Motor neuron (in vitro differentiated cells): ENCODE measurements at regions of chr11 and their contacts with region 1.

Region 1: DNA sequence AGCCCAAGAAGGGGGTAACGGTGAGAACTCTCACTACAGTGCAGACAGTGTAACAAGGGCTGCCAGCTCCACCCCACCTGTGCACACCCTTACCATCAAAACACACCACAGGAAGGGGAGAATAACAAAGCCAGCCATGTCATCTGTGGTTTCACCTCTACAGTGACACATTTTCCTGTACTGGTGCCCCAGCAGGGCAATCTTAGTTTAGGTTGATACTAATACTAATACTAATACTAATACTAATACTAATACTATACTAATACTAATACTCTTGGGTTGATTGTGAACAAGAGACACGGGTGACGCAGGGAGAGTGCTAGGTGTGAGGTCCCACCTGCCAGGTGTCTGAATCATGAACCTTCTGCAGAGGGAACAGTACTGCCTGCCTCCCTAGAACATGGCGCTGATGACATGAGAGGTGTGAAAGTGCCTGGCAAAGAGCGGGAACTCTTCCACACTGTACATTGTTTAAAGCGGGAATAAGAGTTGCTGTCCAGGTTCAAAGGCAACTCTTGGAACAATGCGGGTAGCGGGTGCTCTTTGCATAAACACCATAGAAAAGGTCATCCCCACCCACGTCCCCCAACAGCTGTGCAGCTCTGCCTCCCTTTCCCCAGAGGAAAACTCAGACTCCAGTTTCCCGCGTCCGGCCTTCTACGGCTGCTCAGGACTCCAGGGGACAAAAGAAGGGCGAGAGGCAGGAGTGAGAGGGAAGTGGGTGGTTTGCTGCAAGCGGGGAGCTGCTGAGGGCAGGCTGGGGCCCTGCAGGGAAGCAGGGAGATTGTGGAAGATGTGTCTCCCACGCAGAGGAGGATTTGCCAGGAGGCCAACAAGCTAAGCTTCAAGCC is 25.0 kb upstream of the TMPRSS4 start:
- ATAC-seq: peak in 2 of 8 experiments; percentile 35 to 48
- H3K4me3 ChIP-seq: no peak overlapping the region
- H3K27ac ChIP-seq: no peak overlapping the region
- H3K4me1 ChIP-seq: no peaks in the 10 kb centered on the region

Region 2: GRCh38 chr11:117817368-117818040 is 234.3 kb before region 1 on chr11:
- in situ Hi-C with region 1: loop called in 3 of 9 experiments (anchors 10 to 25 kb)
- ATAC-seq: peak; percentile 3 to 61 (median 10)
- H3K4me3 ChIP-seq: no peak overlapping the region
- H3K27ac ChIP-seq: peak overlapping the region in 1 of 2 donors; percentile 78
- H3K4me1 ChIP-seq: peaks cover 35 to 45% of the 10 kb centered on the region in 2 donors

Region 3: GRCh38 chr11:117843666-117844484 is 208.0 kb before region 1 on chr11:
- in situ Hi-C with region 1: loop called in 3 of 9 experiments (anchors 25 kb)
- ATAC-seq: peak; percentile 67 to 90 (median 79)
- H3K4me3 ChIP-seq: no peak overlapping the region
- H3K27ac ChIP-seq: no peak overlapping the region
- H3K4me1 ChIP-seq: peaks cover 0 to 2% of the 10 kb centered on the region in 2 donors